ENCODE measurements at regions of chr12 and their contacts with region 1.

Region 1: GRCh38 chr12:45215419-45216229 is at the start of gene ANO6:
- DNase-seq: peak; percentile 96
- total RNA-seq, gene ANO6: 49.0 TPM

Region 2: DNA sequence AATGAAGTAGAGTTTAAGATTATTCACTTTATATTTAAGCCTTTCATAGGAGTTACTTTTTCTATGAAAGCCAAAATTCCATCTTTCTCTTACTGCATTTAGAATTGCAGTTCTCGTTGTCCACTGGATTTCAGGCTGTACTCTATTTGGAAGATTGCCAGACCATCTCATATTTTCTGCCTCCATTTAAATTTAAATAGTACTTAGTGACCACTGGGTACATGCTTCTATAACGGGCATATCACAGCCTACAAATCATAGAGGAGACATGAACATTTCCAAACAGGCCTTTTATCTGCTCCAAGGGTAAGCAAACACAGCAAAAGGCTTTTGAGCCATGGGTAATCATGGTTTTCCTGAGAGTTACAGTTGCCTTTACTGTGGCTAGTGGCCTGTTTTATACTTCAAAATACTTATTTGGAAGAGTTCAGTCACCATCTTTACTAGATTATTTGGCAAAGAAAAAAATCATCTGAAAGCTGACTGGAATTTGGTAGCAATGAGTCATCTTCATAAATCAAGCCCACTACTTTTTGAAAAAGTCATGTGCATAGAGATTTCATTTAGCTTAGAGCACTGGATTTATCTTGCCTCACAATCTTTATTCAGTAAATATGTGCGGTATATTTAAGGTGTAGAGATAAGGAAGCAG is 16.0 kb after region 1 on chr12:
- intact Hi-C with region 1: loop called (anchors 1 kb)
- DNase-seq: no peak

Region 3: GRCh38 chr12:45268672-45269411 is 53.2 kb after region 1 on chr12:
- intact Hi-C with region 1: loop called (anchors 2 kb)
- DNase-seq: peak; percentile 88

Region 4: GRCh38 chr12:45357539-45358417 is 142.2 kb after region 1 on chr12:
- intact Hi-C with region 1: loop called (anchors 5 kb)
- DNase-seq: no peak